Sigmoid colon (tissue), 7 donors: ENCODE measurements at regions of chr15 and their contacts with region 1.

Region 1: DNA sequence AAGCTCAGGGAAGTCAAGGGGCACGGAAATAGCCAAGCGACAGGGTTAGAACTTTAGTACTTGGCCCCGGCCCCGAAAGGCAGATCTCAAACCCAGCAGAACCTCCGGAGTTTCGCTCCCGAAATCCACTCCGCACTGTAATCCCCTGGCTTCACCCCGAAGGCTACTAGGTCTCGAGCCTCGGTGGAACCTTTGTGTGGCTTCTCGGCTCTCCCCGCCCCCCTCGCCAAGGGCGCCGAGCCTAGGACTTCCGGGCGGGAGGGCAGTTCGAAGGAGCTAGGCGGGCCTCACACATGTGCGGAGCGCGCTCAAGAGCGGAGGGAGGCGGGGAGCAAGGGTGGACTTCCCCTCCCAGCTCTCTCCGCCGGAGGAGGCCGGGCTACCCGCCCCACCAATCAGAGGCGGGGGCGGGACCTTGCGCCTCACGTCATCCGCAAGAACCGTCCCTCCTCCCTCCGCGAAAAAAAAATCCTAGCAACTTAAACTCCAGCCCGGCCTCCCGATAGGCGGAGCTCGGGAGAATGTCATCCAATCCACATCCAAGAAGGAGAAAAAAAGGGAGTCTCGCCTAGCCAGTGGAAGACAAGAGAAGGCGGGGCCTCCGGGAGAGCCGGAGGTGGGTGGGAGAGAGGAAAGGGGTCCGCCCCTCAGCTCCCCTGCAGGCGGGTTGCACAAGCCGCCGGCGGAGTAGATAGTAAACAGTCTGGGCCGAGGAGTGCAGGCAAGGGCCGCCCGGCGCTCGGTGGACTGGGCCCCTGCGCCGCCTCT is 2.4 kb upstream of the SIN3A start:
- DNase-seq: peak; percentile 99
- H3K4me3 ChIP-seq: peak overlapping the region; percentile 75 to 90 (median 84)
- H3K27ac ChIP-seq: peak overlapping the region; percentile 98 to 100 (median 100)
- H3K4me1 ChIP-seq: peaks cover 0 to 41% (median 28%) of the 10 kb centered on the region in 4 donors
- H3K27me3 ChIP-seq: no peaks in the 10 kb centered on the region
- CTCF ChIP-seq: no peak
- EP300 ChIP-seq: no peak
- POLR2A ChIP-seq: peak; percentile 77 to 85

Region 2: DNA sequence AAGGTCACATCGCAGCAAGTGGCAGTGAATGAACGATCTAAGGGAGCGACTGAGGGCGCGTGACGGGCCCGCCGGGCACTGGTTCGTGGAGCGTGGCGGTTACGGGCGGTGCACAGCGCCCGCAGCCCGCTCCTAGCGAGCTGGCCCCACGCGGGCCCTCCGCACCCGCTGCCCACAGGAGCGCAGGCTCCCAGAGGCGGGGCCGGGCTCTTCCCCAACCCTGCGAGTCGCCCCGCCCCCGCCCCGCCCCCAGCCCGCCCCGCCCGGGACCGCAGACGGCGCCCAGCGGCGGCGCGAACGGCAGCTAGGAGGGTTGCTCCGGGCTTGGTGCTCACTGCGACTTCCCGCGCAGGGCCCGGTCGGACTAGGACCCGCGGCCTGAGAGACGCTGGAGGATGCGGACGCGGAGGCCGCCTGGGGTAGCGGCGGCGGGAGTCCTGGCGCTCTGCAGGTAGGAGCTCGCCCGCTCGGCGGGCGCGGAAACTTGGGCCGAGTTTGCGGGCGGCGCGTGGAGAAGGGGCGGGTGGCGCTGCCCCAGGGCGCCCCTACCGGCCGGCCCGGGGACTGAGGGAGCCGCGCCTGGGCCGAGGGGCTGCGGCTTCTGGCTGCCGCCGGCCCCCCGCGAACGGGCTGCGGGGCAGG is 252.2 kb before region 1 on chr15 and contains the start of gene C15orf39:
- intact Hi-C with region 1: loop called (anchors 10 kb)
- DNase-seq: peak; percentile 84
- H3K4me3 ChIP-seq: peak within 1 kb of the TSS; percentile 69 to 87 (median 83)
- H3K27ac ChIP-seq: peak within 1 kb of the TSS; percentile 92 to 94 (median 92)
- H3K4me1 ChIP-seq: peaks cover 0 to 46% (median 42%) of the 10 kb centered on the region in 4 donors
- H3K27me3 ChIP-seq: no peaks in the 10 kb centered on the region
- CTCF ChIP-seq: peak; percentile 50 to 96 (median 56)
- EP300 ChIP-seq: no peak
- POLR2A ChIP-seq: peak; percentile 89 to 91
- total RNA-seq, gene C15orf39: 4.9 to 20.2 (median 12.0) TPM

Region 3: GRCh38 chr15:75237316-75237982 is 216.4 kb before region 1 on chr15:
- intact Hi-C with region 1: no loop called
- DNase-seq: peak; percentile 44
- H3K4me3 ChIP-seq: no peak overlapping the region
- H3K27ac ChIP-seq: no peak overlapping the region
- H3K4me1 ChIP-seq: no peaks in the 10 kb centered on the region
- H3K27me3 ChIP-seq: peaks cover 0 to 48% (median 6%) of the 10 kb centered on the region in 3 donors
- CTCF ChIP-seq: no peak
- EP300 ChIP-seq: no peak
- POLR2A ChIP-seq: no peak

Region 4: GRCh38 chr15:75532413-75533147 is 78.7 kb after region 1 on chr15:
- intact Hi-C with region 1: loop called (anchors 5 kb)
- DNase-seq: peak; percentile 86
- H3K4me3 ChIP-seq: no peak overlapping the region
- H3K27ac ChIP-seq: peak overlapping the region; percentile 71 to 77 (median 74)
- H3K4me1 ChIP-seq: peaks cover 0 to 36% (median 30%) of the 10 kb centered on the region in 4 donors
- H3K27me3 ChIP-seq: no peaks in the 10 kb centered on the region
- CTCF ChIP-seq: peak; percentile 27 to 42 (median 30)
- EP300 ChIP-seq: peak in 1 of 4 donors; percentile 14
- POLR2A ChIP-seq: no peak

Region 5: GRCh38 chr15:75625542-75626347 is 171.9 kb after region 1 on chr15 and contains the start of gene SNUPN:
- intact Hi-C with region 1: loop called (anchors 5 kb)
- DNase-seq: peak; percentile 96
- H3K4me3 ChIP-seq: peak within 1 kb of the TSS; percentile 73 to 97 (median 94)
- H3K27ac ChIP-seq: peak within 1 kb of the TSS; percentile 90 to 98 (median 94)
- H3K4me1 ChIP-seq: peaks cover 0 to 21% (median 14%) of the 10 kb centered on the region in 4 donors
- H3K27me3 ChIP-seq: no peaks in the 10 kb centered on the region
- CTCF ChIP-seq: no peak
- EP300 ChIP-seq: no peak
- POLR2A ChIP-seq: peak; percentile 36 to 53
- total RNA-seq, gene SNUPN: 15.3 to 28.6 (median 21.9) TPM